Prostate gland (tissue), 2 donors: ENCODE measurements at regions of chr5 and their contacts with region 1.

Region 1: GRCh38 chr5:170267431-170268152 is 30.0 kb downstream of the LCP2 start:
- DNase-seq: peak; percentile 53
- H3K4me3 ChIP-seq: no peak overlapping the region
- H3K27ac ChIP-seq: peak overlapping the region; percentile 42 to 43
- H3K4me1 ChIP-seq: no peaks in the 10 kb centered on the region
- H3K27me3 ChIP-seq: peaks cover 4% of the 10 kb centered on the region
- CTCF ChIP-seq: peak; percentile 37 to 81 (median 74)
- POLR2A ChIP-seq: no peak

Region 2: GRCh38 chr5:170393235-170393634 is 125.6 kb after region 1 on chr5:
- intact Hi-C with region 1: loop called (anchors 5 kb)
- DNase-seq: no peak
- H3K4me3 ChIP-seq: no peak overlapping the region
- H3K27ac ChIP-seq: no peak overlapping the region
- H3K4me1 ChIP-seq: no peaks in the 10 kb centered on the region
- H3K27me3 ChIP-seq: no peaks in the 10 kb centered on the region
- CTCF ChIP-seq: no peak
- POLR2A ChIP-seq: no peak

Region 3: GRCh38 chr5:170420780-170421412 is 153.3 kb after region 1 on chr5:
- intact Hi-C with region 1: loop called (anchors 5 kb)
- DNase-seq: peak; percentile 63
- H3K4me3 ChIP-seq: no peak overlapping the region
- H3K27ac ChIP-seq: no peak overlapping the region
- H3K4me1 ChIP-seq: no peaks in the 10 kb centered on the region
- H3K27me3 ChIP-seq: peaks cover 2% of the 10 kb centered on the region
- CTCF ChIP-seq: peak; percentile 68 to 82 (median 70)
- POLR2A ChIP-seq: no peak